ENCODE measurements at regions of chr2 and their contacts with region 1.

Region 1: GRCh38 chr2:68925295-68925896 is 27.3 kb downstream of the GKN2 start:
- DNase-seq: peak; percentile 70
- ATAC-seq: peak; percentile 85
- H3K4me3 Mint-ChIP-seq: no peak overlapping the region
- H3K27ac Mint-ChIP-seq: no peak overlapping the region
- H3K4me1 Mint-ChIP-seq: peaks cover 4% of the 10 kb centered on the region
- H3K27me3 Mint-ChIP-seq: peaks cover 30% of the 10 kb centered on the region

Region 2: GRCh38 chr2:68467077-68467960 is 458.1 kb before region 1 on chr2 and contains the starts of genes APLF and FBXO48:
- CTCF ChIA-PET with region 1: interaction called, 69 read pairs
- DNase-seq: peak; percentile 99
- ATAC-seq: peak; percentile 90
- H3K4me3 Mint-ChIP-seq: peak within 1 kb of the TSS; percentile 100
- H3K27ac Mint-ChIP-seq: peak within 1 kb of the TSS; percentile 93
- H3K4me1 Mint-ChIP-seq: peaks cover 39% of the 10 kb centered on the region
- H3K27me3 Mint-ChIP-seq: no peaks in the 10 kb centered on the region
- total RNA-seq, gene APLF: 3.0 to 3.3 TPM
- total RNA-seq, gene FBXO48: 3.3 to 3.4 TPM

Region 3: GRCh38 chr2:68594674-68595492 is 330.5 kb before region 1 on chr2:
- CTCF ChIA-PET with region 1: interaction called, 17 read pairs
- DNase-seq: peak; percentile 69
- ATAC-seq: peak; percentile 77
- H3K4me3 Mint-ChIP-seq: peak overlapping the region; percentile 27
- H3K27ac Mint-ChIP-seq: peak overlapping the region; percentile 50
- H3K4me1 Mint-ChIP-seq: peaks cover 11% of the 10 kb centered on the region
- H3K27me3 Mint-ChIP-seq: peaks cover 13% of the 10 kb centered on the region

Region 4: GRCh38 chr2:68715353-68716041 is 209.9 kb before region 1 on chr2:
- CTCF ChIA-PET with region 1: interaction called, 25 read pairs
- DNase-seq: peak; percentile 68
- ATAC-seq: peak; percentile 17
- H3K4me3 Mint-ChIP-seq: peak overlapping the region; percentile 27
- H3K27ac Mint-ChIP-seq: peak overlapping the region; percentile 78
- H3K4me1 Mint-ChIP-seq: peaks cover 75% of the 10 kb centered on the region
- H3K27me3 Mint-ChIP-seq: no peaks in the 10 kb centered on the region

Region 5: DNA sequence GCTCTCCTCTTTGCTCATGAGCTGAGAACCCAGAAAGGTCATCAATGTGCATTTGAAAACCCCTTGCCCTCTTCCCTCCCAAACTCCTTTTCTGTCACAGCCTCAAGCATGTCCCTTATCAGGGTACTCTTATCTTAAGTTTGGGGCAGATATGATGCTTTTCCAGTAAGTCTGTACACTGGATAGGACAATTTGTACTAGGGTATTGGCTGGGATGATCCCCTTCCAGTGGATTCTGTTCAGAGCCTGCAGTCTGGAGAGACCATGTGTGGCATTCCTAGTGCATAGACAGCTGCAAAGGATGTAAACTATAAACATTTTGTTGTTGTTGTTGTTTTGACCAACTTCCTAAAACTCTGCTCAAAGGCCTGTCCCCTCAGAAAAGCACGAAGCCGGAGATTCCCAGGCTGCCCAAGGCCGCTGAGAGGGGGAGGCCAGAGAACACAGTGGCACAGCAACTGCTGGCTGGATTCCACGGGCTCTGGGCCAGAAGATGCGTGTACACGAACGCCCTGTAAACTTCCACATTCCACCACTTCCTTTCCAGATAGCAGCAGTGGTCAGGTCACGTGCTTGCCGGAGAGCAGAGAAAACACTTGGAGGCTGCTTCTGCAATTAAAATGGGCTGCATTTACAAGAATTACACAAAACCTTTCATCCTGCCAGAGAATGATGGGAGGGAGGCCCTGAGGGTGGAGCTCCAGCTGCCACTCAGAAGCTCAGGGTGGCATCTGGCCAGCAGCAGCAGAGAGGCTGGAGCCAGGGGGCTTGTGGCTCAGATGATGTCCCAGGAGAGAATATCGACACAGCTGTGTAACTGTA is 96.3 kb before region 1 on chr2:
- CTCF ChIA-PET with region 1: interaction called, 16 read pairs
- DNase-seq: peak; percentile 87
- ATAC-seq: peak; percentile 66
- H3K4me3 Mint-ChIP-seq: peak overlapping the region; percentile 27
- H3K27ac Mint-ChIP-seq: peak overlapping the region; percentile 85
- H3K4me1 Mint-ChIP-seq: peaks cover 62% of the 10 kb centered on the region
- H3K27me3 Mint-ChIP-seq: no peaks in the 10 kb centered on the region

Region 6: DNA sequence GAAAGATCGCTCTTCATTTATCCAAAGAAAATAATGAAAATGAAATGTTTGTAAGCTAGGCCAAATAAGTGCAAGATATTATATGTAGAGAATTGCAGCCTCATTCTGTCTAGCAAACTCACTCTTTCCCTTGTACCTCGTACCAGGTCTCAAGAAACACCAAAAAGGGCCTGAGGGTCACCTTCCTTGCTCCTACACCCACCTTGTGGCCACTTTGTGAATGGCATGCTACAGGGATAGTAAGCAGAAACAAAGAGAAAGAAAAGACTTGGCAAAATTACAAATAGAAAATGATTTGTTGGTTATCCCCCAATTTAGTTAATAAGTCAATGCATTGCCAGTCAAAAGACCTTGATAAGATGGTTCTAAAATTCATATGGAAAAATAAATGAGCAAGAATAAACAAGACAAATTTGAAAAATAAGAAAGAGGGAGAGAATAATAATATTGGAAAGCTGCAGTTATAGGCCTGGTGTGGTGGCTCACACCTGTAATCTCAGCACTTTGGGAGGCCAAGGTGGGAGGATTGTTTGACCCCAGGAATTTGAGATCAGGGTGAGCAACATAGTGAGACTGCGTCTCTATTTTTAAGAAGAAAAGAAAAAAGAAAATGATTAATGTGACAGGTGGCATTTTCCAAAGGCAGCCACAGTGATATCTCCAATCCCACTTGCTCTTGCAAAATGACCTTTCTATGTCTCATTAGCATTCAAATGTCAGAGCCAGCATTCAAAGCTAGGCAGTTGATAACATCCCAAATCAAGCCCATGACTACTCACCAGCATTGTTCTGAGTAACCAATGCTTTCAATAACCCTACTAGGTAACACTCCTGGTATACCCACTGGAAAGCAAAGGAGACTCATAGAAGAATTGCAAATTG is 15.4 kb before region 1 on chr2:
- CTCF ChIA-PET with region 1: interaction called, 36 read pairs
- DNase-seq: peak; percentile 89
- ATAC-seq: no peak
- H3K4me3 Mint-ChIP-seq: no peak overlapping the region
- H3K27ac Mint-ChIP-seq: peak overlapping the region; percentile 77
- H3K4me1 Mint-ChIP-seq: peaks cover 40% of the 10 kb centered on the region
- H3K27me3 Mint-ChIP-seq: no peaks in the 10 kb centered on the region

Region 7: GRCh38 chr2:68971591-68972231 is 46.3 kb after region 1 on chr2:
- CTCF ChIA-PET with region 1: no interaction called
- DNase-seq: no peak
- ATAC-seq: no peak
- H3K4me3 Mint-ChIP-seq: no peak overlapping the region
- H3K27ac Mint-ChIP-seq: no peak overlapping the region
- H3K4me1 Mint-ChIP-seq: no peaks in the 10 kb centered on the region
- H3K27me3 Mint-ChIP-seq: peaks cover 32% of the 10 kb centered on the region

Region 8: DNA sequence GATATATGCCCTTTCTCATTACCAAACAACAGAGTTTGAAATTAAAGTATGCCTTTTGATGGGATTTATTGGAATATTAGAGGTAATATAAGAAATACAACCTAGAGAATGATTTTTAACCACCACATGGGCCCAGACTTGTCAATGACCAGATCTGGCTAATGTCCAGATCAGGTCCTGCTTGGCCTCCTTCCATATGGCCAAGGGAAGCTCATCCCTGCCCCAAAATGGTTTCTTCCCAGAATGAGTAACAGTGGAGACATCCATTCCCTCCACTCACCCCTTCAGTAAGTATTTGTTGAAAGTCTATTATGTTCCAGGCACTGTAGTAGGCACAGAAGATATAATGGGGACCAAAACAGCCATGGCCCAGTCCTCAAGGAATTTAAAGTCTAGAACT is 142.5 kb after region 1 on chr2:
- CTCF ChIA-PET with region 1: no interaction called
- DNase-seq: no peak
- ATAC-seq: no peak
- H3K4me3 Mint-ChIP-seq: no peak overlapping the region
- H3K27ac Mint-ChIP-seq: no peak overlapping the region
- H3K4me1 Mint-ChIP-seq: no peaks in the 10 kb centered on the region
- H3K27me3 Mint-ChIP-seq: peaks cover 67% of the 10 kb centered on the region

Region 9: GRCh38 chr2:69863298-69863697 is 937.9 kb after region 1 on chr2:
- CTCF ChIA-PET with region 1: no interaction called
- DNase-seq: no peak
- ATAC-seq: no peak
- H3K4me3 Mint-ChIP-seq: no peak overlapping the region
- H3K27ac Mint-ChIP-seq: no peak overlapping the region
- H3K4me1 Mint-ChIP-seq: no peaks in the 10 kb centered on the region
- H3K27me3 Mint-ChIP-seq: no peaks in the 10 kb centered on the region

Measured in activated CD8-positive, alpha-beta memory T cell treated with anti-CD3 and anti-CD28 coated beads, Interleukin-2, amount 10 ng/mL, durations not matched to agents 7 days and 5 days (primary cell).